ENCODE measurements at regions of chrX and their contacts with region 1.

Region 1: DNA sequence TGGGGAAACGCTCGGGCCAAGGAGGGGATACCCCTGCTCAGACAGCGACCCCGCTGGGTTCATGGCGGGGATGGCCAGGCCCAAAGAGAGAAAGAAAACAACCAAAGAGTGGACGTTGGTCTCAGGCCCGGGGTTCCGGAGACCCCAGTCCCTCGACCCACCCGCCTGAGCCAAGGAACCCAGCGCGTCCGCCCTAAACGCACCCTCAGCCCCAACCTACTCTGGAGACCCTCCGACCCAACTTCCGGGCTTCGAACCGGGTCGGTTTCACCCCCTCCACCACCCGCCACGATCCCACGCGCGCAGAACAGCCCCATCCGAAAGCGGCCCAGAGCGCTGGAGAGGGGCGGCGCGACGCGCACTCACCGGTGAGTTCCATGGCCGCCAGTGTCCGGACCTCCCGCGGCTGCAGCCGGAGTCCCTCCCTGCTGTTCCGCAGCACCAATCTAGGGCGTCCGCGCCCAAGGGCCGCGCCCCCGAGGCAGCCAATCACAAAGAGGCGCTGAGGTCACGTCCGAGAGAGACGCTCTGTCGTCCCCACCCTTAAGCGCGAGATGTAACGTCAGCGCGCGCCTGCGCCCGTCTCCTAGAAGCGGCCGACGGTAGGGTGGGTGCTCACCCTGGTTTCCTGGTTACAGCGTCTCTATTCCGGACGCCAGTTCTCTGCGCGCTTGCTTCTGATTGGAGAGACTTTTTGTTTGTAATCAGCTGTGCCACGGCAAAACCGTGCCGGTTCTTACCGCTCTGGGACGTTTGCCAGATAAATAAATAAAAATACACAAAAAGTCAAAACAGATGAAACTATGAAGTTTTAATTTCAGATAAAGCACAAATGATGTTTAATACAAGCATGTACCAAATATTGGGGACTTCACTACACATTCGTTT is at the start of gene PIGA:
- DNase-seq: peak; percentile 94
- H3K4me3 Mint-ChIP-seq: peak within 1 kb of the TSS; percentile 90
- H3K27ac Mint-ChIP-seq: peak within 1 kb of the TSS; percentile 88
- H3K4me1 Mint-ChIP-seq: peaks cover 13% of the 10 kb centered on the region
- H3K27me3 Mint-ChIP-seq: peaks cover 2% of the 10 kb centered on the region
- total RNA-seq, gene PIGA: 31.1 to 36.7 TPM

Region 2: DNA sequence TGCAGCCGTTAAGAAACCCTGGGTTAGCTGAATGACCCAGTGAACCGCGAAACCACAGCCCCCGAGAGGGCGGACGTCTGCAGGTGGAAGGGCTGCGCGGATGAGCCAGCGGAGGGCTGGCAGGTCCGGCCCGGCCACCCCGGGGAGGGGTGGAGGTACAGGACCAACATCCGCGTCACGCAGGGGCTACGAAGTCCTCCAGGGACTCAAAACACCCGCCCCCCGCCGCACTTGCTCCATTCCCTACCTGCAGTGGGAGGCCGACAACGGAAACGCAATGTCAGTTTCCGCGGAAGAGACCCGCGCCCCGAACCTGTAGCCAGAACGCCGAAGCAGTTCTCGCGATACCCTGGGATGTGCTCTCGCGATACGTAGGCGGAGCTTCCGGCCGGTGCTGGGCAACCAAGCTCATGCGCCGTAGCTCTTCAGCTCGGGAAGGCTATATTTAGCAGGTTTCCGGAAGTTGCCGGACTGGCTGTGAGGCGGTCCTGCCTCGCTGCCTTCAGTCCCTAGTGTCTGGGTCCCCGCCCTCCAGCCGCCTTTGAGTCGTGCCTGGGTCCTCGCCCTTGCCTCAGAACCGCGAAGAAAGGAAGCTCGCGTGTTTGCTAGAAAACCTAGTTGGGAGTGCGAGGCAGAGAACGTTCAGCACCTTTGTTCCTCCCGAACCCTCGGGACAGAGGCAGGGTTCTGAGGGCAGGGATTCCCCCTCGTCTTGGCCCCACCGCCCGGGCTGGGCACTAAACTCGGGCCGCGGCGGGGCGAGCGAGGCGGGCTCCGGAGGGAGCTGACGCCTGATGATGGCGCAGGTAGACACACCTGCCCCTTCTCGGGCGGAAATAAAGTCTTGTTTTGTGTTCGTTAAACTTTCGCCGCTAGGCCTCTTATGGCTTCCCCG is 1600.9 kb before region 1 on chrX and contains the starts of genes OFD1 and TRAPPC2:
- CTCF ChIA-PET with region 1: no interaction called
- POLR2A ChIA-PET with region 1: no interaction called
- intact Hi-C with region 1: loop called (anchors 5 kb)
- DNase-seq: peak; percentile 93
- H3K4me3 Mint-ChIP-seq: peak within 1 kb of the TSS; percentile 92
- H3K27ac Mint-ChIP-seq: peak within 1 kb of the TSS; percentile 96
- H3K4me1 Mint-ChIP-seq: peaks cover 45% of the 10 kb centered on the region
- H3K27me3 Mint-ChIP-seq: no peaks in the 10 kb centered on the region
- total RNA-seq, gene OFD1: 24.5 to 30.9 TPM
- total RNA-seq, gene TRAPPC2: 14.1 to 16.1 TPM

Region 3: GRCh38 chrX:15158736-15159406 is 176.5 kb before region 1 on chrX:
- CTCF ChIA-PET with region 1: no interaction called
- POLR2A ChIA-PET with region 1: no interaction called
- intact Hi-C with region 1: loop called (anchors 2 kb)
- DNase-seq: peak; percentile 51
- H3K4me3 Mint-ChIP-seq: peak overlapping the region; percentile 57
- H3K27ac Mint-ChIP-seq: peak overlapping the region; percentile 70
- H3K4me1 Mint-ChIP-seq: peaks cover 34% of the 10 kb centered on the region
- H3K27me3 Mint-ChIP-seq: peaks cover 2% of the 10 kb centered on the region

Region 4: DNA sequence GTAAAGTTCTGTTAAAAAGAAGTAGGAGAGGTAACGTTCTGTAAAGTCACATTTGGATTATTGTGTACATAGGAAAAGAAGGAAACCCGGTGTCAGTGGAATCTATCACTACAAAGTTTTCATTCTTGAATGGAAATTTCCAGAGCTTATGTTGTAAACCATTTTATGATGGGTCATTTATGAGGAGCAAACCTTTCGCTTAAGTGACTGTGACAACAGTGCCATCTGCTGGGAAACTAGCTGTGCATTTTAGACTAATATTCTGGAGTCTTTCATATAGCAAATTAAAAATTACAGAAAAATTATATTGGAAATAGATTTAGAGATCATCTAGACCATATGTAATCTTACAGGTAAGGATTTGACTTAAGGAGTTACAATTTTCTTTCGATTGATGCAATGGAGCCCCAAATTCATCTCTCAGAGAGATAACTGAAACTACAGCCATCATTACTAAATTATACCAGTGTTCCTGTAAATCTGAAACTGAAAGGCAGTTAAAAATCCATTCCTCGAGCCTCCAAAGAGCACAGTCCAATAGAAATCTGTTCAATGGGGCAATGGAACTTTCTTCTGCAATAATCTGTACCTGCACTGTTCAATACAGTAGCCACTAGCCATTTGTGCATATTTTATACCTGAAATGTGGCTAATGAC is 92.4 kb before region 1 on chrX:
- CTCF ChIA-PET with region 1: no interaction called
- POLR2A ChIA-PET with region 1: no interaction called
- intact Hi-C with region 1: no loop called
- DNase-seq: peak; percentile 36
- H3K4me3 Mint-ChIP-seq: no peak overlapping the region
- H3K27ac Mint-ChIP-seq: no peak overlapping the region
- H3K4me1 Mint-ChIP-seq: peaks cover 8% of the 10 kb centered on the region
- H3K27me3 Mint-ChIP-seq: no peaks in the 10 kb centered on the region

Region 5: GRCh38 chrX:15349046-15349445 is 13.7 kb after region 1 on chrX:
- CTCF ChIA-PET with region 1: interaction called, 11 read pairs
- POLR2A ChIA-PET with region 1: no interaction called
- intact Hi-C with region 1: no loop called
- DNase-seq: no peak
- H3K4me3 Mint-ChIP-seq: no peak overlapping the region
- H3K27ac Mint-ChIP-seq: no peak overlapping the region
- H3K4me1 Mint-ChIP-seq: no peaks in the 10 kb centered on the region
- H3K27me3 Mint-ChIP-seq: peaks cover 1% of the 10 kb centered on the region

Region 6: GRCh38 chrX:15854712-15855567 is 519.6 kb after region 1 on chrX and contains the start of gene AP1S2:
- CTCF ChIA-PET with region 1: no interaction called
- POLR2A ChIA-PET with region 1: no interaction called
- intact Hi-C with region 1: loop called (anchors 10 kb)
- DNase-seq: peak; percentile 94
- H3K4me3 Mint-ChIP-seq: peak within 1 kb of the TSS; percentile 86
- H3K27ac Mint-ChIP-seq: peak within 1 kb of the TSS; percentile 95
- H3K4me1 Mint-ChIP-seq: peaks cover 23% of the 10 kb centered on the region
- H3K27me3 Mint-ChIP-seq: no peaks in the 10 kb centered on the region
- total RNA-seq, gene AP1S2: 21.4 to 29.3 TPM